Left cardiac atrium (tissue), 4 donors: ENCODE measurements at regions of chr17 and their contacts with region 1.

Region 1: DNA sequence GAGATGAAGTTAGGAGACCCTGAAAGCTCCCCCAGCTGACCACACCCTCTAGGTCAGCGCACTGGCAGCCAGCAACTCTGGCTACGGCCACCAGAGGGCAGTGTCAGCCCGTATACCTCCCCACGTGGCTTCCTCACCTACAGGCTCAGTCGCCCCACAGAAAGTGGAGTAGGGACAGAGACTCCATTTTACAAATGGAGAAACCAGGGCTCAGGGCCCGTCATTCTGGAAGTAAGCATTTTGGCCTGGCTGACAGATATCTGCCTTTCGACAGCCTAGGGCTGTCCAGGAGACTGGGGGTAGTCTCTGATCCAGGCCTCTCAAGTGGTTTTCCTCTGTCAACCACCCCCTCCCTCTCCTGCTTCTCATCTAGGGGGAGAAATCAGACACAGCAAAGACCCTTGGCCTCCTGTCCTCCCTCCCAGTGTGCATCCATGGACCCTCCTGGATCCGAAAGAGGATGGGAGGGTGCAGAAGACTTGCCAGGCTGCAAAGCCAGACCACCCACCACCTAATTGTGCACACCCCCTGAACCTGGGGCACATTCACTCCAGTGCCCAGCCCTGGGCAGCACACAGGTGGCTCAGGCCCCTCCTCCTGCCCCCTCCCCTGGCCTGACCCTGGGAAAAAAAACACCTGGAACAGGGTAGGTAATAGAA is 3.8 kb upstream of the HAP1 start:
- DNase-seq: peak; percentile 80
- ATAC-seq: peak; percentile 85 to 89

Region 2: GRCh38 chr17:41801374-41802271 is 63.4 kb after region 1 on chr17:
- intact Hi-C with region 1: loop called (anchors 1 to 5 kb)
- DNase-seq: peak; percentile 83
- ATAC-seq: peak; percentile 82 to 85

Region 3: GRCh38 chr17:41870627-41871026 is 132.4 kb after region 1 on chr17:
- intact Hi-C with region 1: loop called in 1 of 2 experiments (anchors 5 kb)
- DNase-seq: no peak
- ATAC-seq: peak in 1 of 2 donors; percentile 34